Spleen (tissue), 13 donors: ENCODE measurements at regions of chr1 and their contacts with region 1.

Region 1: GRCh38 chr1:197868751-197869489 is 33.5 kb upstream of the C1orf53 start:
- DNase-seq: no peak
- H3K4me3 ChIP-seq: no peak overlapping the region
- H3K27ac ChIP-seq: no peak overlapping the region
- H3K4me1 ChIP-seq: no peaks in the 10 kb centered on the region
- H3K27me3 ChIP-seq: no peaks in the 10 kb centered on the region
- CTCF ChIP-seq: peak in 8 of 11 experiments; percentile 32 to 69 (median 55)
- POLR2A ChIP-seq: no peak

Region 2: GRCh38 chr1:197521118-197521739 is 347.7 kb before region 1 on chr1:
- intact Hi-C with region 1: loop called (anchors 10 kb)
- DNase-seq: no peak
- H3K4me3 ChIP-seq: no peak overlapping the region
- H3K27ac ChIP-seq: no peak overlapping the region
- H3K4me1 ChIP-seq: no peaks in the 10 kb centered on the region
- H3K27me3 ChIP-seq: no peaks in the 10 kb centered on the region
- CTCF ChIP-seq: peak; percentile 23 to 73 (median 56)
- POLR2A ChIP-seq: no peak

Region 3: GRCh38 chr1:197614916-197615692 is 253.8 kb before region 1 on chr1:
- intact Hi-C with region 1: loop called (anchors 5 kb)
- DNase-seq: no peak
- H3K4me3 ChIP-seq: no peak overlapping the region
- H3K27ac ChIP-seq: no peak overlapping the region
- H3K4me1 ChIP-seq: peaks cover 0 to 5% (median 0%) of the 10 kb centered on the region in 6 donors
- H3K27me3 ChIP-seq: no peaks in the 10 kb centered on the region
- CTCF ChIP-seq: peak in 8 of 11 experiments; percentile 16 to 59 (median 44)
- POLR2A ChIP-seq: no peak